ENCODE measurements at regions of chr6 and their contacts with region 1.

Region 1: DNA sequence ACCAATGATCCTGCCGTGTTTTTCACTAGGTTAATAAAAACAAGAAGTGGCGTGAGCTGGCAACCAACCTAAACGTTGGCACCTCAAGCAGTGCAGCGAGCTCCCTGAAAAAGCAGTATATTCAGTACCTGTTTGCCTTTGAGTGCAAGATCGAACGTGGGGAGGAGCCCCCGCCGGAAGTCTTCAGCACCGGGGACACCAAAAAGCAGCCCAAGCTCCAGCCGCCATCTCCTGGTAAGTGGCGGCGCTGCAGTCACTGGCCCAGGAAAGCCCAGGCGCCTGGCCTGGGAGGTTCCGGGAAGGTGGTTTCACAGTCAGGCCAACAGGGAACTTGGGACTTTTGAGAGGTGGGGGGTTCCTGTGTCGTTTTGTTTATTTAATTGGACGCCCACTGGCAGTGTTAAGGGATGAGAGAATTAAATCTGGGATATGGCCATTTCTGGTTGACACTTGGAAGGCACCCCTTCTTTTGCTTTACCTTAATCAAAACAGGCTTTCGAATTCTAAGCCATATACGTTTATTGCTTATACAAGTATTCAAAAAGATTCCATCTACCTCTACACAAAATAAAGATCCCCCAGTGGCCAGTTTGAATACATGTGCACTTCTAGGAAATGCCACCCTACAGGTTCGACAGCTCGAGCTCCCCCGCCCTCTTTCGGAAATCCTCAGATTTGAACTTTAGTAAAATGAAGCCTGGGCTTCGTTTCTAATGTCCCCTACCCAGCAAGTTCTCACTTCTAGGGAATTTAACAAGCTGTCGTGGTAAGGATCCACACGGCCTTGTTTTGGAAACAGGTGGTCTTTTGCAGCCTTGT is 138.9 kb downstream of the TMEM242 start:
- DNase-seq: no peak
- H3K4me3 ChIP-seq: no peak overlapping the region
- CTCF ChIP-seq: peak; percentile 95

Region 2: GRCh38 chr6:157172231-157172701 is 12.1 kb before region 1 on chr6:
- CTCF ChIA-PET with region 1: interaction called, 20 read pairs
- POLR2A ChIA-PET with region 1: no interaction called
- DNase-seq: no peak
- H3K4me3 ChIP-seq: no peak overlapping the region
- CTCF ChIP-seq: no peak

Region 3: DNA sequence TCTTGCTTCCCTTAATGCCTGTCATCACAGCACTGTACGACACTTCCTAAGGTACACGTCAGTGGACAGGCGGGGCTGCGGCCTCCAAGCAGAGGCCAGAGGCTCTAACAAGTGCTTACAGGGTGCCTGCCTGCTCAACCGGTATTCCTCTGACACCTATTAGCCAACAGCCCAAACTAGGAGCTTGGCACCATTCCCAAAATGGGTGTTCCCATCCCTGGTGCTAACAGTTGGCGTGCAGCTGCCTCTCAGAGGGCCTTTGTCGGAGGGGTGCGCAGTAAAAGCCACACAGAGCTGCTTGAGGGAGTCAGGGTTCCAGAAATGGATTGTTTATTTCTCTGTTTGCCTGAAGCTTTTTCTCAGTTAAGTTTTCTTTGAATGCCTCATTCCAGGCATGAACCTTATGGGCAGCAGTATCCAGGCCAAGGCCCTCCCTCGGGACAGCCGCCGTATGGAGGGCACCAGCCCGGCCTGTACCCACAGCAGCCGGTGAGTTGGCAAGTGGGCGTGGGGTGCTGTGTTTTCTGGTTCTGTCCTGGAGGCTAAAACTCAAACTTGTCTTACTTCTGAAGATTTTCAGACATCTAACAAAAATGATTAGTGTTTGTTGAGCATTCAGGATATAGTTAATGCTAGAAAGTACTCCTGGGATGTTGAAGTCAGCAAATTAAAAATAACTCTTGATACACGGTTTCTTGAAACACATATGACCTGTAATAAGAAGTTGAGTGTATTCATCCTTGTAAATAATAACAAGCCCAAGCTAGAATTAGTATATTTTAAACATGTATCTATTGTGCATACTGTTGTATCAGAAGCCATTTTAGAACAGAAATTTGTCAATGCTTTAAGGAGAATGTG is 14.2 kb after region 1 on chr6:
- CTCF ChIA-PET with region 1: interaction called, 23 read pairs
- POLR2A ChIA-PET with region 1: no interaction called
- DNase-seq: no peak
- H3K4me3 ChIP-seq: no peak overlapping the region
- CTCF ChIP-seq: no peak

Measured in AG04449 (cell line).